ENCODE measurements at regions of chr10 and their contacts with region 1.

Region 1: DNA sequence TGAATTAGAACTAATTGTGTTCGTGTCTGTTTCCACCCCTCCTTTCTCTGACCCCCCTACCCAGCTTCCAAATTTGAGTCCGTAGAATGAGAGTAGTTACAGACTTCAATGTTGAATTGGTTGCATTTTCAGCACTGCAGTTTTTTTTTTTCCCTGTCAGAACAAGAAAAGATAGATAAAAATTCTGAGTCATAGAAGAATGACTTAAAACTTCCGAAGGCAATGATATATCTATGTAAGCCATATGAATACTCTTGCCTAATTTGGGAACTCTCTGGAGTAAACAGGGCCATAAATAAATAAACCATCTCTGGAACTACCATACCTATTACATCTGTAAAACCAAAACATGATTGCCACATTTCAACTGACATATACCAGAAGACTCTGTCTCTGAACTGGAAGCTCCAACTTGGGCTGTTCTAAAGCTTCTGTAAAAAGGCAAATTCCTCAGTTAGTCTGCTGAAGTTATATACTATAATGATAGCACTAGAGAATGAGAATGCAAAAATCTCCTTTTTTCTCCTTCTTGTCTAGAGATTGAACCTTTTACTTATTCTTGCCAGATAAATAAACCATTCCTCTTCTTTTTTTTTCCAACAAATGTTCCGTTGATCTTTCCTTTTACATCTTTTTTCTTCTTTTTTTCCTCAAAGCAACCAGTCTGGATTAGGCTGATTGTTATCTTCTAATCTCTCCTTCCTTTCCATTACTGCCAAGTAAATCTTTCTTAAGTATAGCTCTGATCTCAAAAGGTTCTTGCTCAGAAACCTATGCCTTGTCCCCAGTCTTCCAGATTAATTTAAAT is 23.5 kb downstream of the VCL start:
- DNase-seq: peak; percentile 18
- H3K4me3 Mint-ChIP-seq: peak overlapping the region; percentile 22
- H3K27ac Mint-ChIP-seq: peak overlapping the region; percentile 79
- H3K4me1 Mint-ChIP-seq: peaks cover 37% of the 10 kb centered on the region
- H3K27me3 Mint-ChIP-seq: no peaks in the 10 kb centered on the region

Region 2: DNA sequence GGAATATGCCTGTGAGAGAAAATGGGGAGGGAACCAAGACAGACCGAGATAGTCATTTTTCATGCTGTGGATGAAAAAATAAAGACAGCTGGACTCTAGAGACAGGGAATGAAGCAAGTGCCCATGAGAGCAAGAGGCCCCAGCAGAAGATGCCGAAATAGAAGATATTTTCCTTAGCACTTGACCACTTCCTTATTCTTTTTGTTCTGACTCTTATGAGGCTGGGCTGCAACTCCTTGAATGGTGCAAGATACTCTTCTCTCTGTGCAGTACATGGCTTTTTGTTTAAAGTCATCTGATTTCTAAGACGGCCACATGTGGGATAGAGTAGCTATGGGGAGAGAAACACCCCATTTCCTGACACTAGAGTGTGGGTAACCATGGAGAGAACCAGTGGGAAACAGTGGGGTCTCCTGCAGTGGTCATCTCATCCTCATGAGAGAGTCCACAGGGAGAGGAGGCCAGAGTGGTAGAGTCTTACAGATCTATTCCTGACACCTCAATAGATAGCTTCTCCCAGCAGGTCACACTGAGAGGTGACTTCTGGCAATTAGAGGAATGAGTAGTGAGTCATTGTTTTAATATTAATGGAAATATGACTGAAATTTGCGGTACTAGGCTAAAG is 41.5 kb before region 1 on chr10:
- CTCF ChIA-PET with region 1: no interaction called
- POLR2A ChIA-PET with region 1: no interaction called
- intact Hi-C with region 1: no loop called
- DNase-seq: no peak
- H3K4me3 Mint-ChIP-seq: no peak overlapping the region
- H3K27ac Mint-ChIP-seq: no peak overlapping the region
- H3K4me1 Mint-ChIP-seq: peaks cover 5% of the 10 kb centered on the region
- H3K27me3 Mint-ChIP-seq: no peaks in the 10 kb centered on the region

Region 3: DNA sequence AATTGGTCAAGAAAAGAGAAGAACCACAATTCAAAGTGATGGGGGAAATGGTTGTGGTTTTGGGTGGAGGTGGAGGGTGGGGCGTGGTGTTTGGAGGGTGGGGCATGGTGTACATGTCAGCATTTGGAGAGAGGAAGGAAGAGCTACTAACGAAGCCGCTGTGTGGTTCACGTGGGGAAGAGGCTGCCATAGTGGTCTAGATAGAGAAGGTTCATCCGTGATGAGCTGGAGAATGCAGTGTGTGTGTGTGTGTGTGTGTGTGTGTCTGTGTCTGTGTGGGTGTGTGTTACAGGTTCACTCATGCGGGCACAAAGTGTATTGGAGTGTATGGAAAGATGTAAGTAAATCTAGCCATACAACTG is 29.6 kb before region 1 on chr10:
- CTCF ChIA-PET with region 1: no interaction called
- POLR2A ChIA-PET with region 1: interaction called, 4 read pairs
- intact Hi-C with region 1: loop called (anchors 2 kb)
- DNase-seq: peak; percentile 86
- H3K4me3 Mint-ChIP-seq: peak overlapping the region; percentile 2
- H3K27ac Mint-ChIP-seq: peak overlapping the region; percentile 55
- H3K4me1 Mint-ChIP-seq: peaks cover 31% of the 10 kb centered on the region
- H3K27me3 Mint-ChIP-seq: no peaks in the 10 kb centered on the region

Region 4: GRCh38 chr10:74058658-74059057 is 37.2 kb after region 1 on chr10:
- CTCF ChIA-PET with region 1: no interaction called
- POLR2A ChIA-PET with region 1: no interaction called
- intact Hi-C with region 1: loop called (anchors 2 kb)
- DNase-seq: peak; percentile 38
- H3K4me3 Mint-ChIP-seq: no peak overlapping the region
- H3K27ac Mint-ChIP-seq: peak overlapping the region; percentile 16
- H3K4me1 Mint-ChIP-seq: peaks cover 33% of the 10 kb centered on the region
- H3K27me3 Mint-ChIP-seq: no peaks in the 10 kb centered on the region